ENCODE measurements at regions of chr6 and their contacts with region 1.

Region 1: GRCh38 chr6:3990692-3991501 is 88.0 kb downstream of the FAM217A start:
- DNase-seq: peak; percentile 93

Region 2: DNA sequence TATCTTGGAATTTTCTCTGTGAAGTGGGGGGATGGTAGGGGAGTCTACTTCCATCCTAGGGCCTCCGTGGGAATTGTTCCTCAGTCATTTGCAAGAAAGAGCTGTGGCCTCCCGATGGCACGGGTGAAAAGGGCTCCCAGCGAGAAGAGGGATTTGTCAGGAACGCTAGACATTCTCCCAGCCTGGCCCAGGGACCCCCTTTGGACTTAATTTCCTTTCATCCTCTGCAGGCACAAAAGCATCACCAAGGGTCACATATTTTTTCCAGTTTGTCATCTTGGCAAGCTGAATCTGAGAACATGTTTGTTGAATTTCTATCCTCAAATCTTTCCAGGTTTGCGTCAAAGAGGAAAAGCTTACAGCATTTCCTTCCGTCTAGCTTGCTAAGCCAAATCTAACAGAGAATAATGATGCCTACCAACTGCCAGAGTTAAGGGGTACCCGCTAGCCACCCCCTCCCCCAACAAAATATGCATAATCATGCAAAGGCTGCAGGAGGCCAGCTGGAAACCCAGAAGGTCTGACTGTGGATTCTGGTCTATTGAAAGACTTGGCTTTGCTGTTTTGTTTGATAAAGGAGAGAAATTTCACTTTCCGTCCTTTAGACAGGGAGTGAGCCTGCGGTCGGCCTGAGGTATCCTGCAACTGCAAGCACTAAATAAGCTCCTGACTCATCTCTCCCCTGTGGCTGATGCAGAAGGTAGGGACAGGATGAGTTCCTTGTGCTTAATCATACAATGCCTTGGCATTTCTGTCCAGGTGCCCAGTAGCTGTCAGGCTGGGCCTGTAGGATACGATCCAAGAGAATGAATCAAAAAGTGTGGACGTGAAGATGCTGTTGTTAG is 709.0 kb before region 1 on chr6:
- intact Hi-C with region 1: loop called (anchors 10 kb)
- DNase-seq: peak; percentile 70

Region 3: GRCh38 chr6:3751730-3752542 is 239.0 kb before region 1 on chr6:
- intact Hi-C with region 1: loop called (anchors 2 kb)
- DNase-seq: peak; percentile 94

Region 4: DNA sequence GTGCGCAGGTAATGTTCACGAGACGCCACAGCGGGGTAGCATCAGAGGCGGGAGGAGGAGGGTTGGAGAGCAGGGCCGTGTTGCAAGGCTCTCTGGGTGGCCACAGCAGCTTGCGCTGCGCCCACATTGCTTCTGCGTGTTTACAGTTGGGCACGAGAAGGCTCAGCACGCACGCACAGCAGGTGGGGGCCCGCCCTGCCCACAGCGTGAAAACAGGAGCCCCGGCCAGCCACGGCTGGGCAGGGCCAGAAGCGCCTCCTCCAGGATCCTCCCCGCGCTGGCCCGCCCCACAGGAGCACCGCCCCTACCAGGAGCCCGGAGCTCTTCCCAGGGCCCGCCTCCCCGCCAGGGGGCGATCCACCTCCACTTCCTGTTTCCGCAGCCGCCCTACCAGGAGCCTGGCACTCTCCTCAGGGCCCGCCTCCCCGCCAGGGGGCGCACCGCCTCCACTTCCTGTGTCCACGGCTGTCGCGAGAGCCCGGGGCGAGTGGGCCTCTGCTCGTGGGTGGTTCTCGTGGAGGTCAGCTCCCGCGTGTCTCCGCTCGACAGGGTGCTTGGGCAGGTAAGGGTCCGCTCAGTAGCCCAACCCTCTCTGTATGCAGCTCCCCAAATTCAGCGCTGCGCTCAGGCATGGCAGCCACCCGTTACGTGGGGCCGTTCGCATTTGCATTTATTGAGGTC is 141.8 kb before region 1 on chr6 and contains the start of gene FAM50B:
- intact Hi-C with region 1: loop called (anchors 10 kb)
- DNase-seq: peak; percentile 97
- total RNA-seq, gene FAM50B: 18.2 TPM

Region 5: DNA sequence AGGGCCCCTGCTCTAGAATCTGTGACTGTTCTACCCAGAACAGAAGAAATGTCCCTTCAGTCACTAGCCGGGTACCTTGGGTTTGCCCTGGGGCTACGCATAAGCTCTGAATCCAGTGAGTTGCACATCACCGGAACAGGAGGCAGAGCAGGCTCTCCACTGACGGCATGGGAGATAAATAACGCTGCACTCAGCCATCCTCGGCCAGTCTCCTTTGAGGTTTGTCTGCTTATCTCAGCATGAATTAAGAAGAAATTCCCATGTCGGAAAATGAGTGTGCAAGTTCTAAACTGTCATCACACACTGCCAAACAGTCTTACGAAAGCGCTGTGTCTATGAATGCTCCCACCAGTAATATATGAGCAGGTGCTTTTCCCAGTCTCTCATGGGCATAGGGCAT is 50.9 kb before region 1 on chr6:
- intact Hi-C with region 1: loop called (anchors 5 kb)
- DNase-seq: no peak

Measured in cardiac septum (tissue), 1 donor.